ENCODE measurements at regions of chr3 and their contacts with region 1.

Region 1: DNA sequence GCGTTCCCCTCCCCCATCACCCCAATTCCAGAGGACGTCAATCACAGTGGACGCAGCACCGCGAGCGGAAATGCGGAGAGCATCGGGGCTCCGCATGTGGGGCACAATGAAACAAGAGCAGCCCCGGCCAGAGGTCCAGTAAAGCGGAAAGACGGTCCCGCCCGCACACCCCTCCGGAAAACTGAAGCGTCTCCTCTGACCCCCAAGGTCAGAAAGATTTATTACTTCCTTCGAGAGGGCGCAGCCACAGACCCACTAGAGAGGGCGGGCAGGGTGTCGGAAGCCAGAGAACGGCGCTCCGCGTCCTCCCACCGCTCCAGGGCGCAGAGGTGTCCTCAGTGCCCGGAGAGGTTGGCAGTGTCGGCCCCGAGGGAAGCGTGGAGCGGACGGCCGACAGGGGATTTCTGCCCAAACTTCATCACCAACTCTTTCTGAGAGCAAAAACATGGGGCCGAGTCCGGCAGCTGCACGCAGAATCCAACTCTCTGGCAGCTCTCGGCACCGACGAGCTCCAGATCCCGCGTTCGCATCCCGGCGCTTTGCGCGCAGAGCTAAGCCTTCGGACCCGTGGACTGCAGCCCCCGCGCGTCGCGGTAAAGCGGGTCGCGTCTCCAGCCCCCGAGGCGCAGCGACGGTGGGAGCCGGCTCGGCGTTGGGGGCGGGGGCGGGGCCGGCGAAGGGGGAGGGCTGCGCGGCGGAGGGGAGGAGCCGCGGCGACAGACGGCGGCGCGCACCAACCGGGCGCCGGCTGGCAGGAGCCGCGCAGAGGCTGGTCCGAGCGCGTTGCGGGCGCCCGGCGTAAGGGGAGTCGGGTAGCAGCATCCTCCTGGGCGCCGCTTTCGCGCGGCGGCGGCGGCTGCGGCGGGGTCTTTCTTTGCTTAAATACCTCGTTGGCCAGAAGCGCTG is at the start of gene CHST2:
- DNase-seq: peak; percentile 60 to 78 (median 74)
- ATAC-seq: peak; percentile 85
- H3K4me3 ChIP-seq: peak within 1 kb of the TSS; percentile 95
- H3K4me3 Mint-ChIP-seq: peak within 1 kb of the TSS; percentile 90 to 97 (median 94)
- H3K27ac ChIP-seq: peak within 1 kb of the TSS; percentile 76
- H3K27ac Mint-ChIP-seq: peak within 1 kb of the TSS; percentile 81 to 93 (median 87)
- H3K4me1 ChIP-seq: peaks cover 0 to 29% of the 10 kb centered on the region in 2 donors
- H3K4me1 Mint-ChIP-seq: peaks cover 21 to 54% (median 45%) of the 10 kb centered on the region in 7 donors
- H3K27me3 ChIP-seq: no peaks in the 10 kb centered on the region
- H3K27me3 Mint-ChIP-seq: peaks cover 0 to 19% (median 0%) of the 10 kb centered on the region in 5 donors
- total RNA-seq, gene CHST2: 3.4 to 12.3 (median 4.5) TPM

Region 2: DNA sequence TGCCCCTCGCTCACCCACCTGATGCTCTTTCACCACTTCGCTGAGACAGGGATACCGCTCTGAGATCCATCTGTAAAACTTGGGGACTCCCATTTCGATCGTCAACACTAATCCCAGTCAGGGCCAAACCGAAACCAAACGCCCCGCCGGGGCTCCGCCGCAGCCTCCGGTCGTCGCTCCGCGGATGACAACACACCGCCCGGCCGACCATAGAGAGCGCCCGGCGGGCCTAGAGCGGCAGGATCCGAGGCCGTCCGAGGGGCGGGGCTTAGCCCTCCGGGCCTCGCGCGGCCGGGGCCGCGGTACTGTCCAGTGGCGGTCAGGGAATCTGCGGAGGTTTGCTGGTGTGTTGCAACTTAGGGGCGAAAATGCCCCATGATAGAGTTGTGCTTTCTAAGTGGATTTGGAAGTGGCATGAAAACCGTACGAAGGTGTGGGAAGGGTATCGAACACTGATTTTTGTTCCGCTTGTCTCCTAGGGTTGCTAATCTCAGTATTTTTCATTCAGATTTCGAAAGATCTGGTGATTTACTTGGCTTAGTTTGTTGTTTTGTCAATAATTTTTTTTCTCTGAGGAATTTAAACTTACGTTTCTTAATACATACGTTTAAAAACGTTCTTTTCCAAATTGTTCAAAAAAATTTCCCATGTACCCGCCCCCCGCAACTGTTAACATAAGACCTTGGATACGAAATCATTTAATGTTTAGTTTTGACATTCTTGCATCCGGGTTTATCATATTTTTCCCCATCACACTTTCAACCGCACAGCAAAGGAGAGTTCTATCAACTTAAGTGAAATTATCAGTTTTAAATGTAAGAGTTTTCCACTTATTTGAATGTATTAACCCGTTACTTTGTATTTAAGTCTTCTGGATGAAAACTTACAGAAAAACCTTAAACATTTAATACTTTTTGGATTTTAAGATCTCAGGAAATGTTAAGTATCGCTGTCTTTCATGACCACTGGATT is 671.1 kb before region 1 on chr3 and contains the start of gene XRN1:
- CTCF ChIA-PET with region 1: no interaction called
- POLR2A ChIA-PET with region 1: no interaction called
- intact Hi-C with region 1: loop called in 1 of 2 experiments (anchors 1 kb)
- DNase-seq: peak; percentile 90 to 97 (median 94)
- ATAC-seq: peak; percentile 99
- H3K4me3 ChIP-seq: peak within 1 kb of the TSS; percentile 78
- H3K4me3 Mint-ChIP-seq: peak within 1 kb of the TSS; percentile 89 to 100 (median 98)
- H3K27ac ChIP-seq: peak within 1 kb of the TSS; percentile 99
- H3K27ac Mint-ChIP-seq: peak within 1 kb of the TSS; percentile 98 to 100 (median 99)
- H3K4me1 ChIP-seq: peaks cover 31% of the 10 kb centered on the region in 2 donors
- H3K4me1 Mint-ChIP-seq: peaks cover 26 to 55% (median 51%) of the 10 kb centered on the region in 7 donors
- H3K27me3 ChIP-seq: no peaks in the 10 kb centered on the region
- H3K27me3 Mint-ChIP-seq: no peaks in the 10 kb centered on the region
- total RNA-seq, gene XRN1: 86.1 to 123 (median 103) TPM

Region 3: DNA sequence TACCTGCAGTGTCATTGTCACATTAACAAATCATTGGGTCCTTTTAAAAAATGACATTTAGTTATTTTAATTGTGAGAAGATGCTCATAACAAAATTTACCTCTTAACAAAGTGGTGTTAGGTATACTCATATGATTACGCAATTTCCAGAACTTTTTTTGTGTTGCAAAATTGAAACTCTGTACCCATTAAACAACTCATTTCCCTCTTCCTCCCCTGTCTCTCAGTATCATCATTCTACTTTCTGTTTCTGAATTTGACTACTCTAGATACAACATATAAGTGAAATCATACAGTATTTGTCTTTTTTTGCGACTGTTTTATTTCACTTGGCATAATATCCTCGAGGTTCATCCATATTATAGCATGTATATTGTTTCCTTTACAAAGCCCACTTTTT is 58.4 kb before region 1 on chr3:
- CTCF ChIA-PET with region 1: no interaction called
- POLR2A ChIA-PET with region 1: no interaction called
- intact Hi-C with region 1: loop called in 1 of 2 experiments (anchors 5 kb)
- DNase-seq: no peak
- ATAC-seq: no peak
- H3K4me3 ChIP-seq: no peak overlapping the region
- H3K4me3 Mint-ChIP-seq: peak overlapping the region in 1 of 10 donors; percentile 22
- H3K27ac ChIP-seq: no peak overlapping the region
- H3K27ac Mint-ChIP-seq: peak overlapping the region in 5 of 9 donors; percentile 16 to 84 (median 50)
- H3K4me1 ChIP-seq: no peaks in the 10 kb centered on the region
- H3K4me1 Mint-ChIP-seq: peaks cover 0 to 24% (median 10%) of the 10 kb centered on the region in 7 donors
- H3K27me3 ChIP-seq: no peaks in the 10 kb centered on the region
- H3K27me3 Mint-ChIP-seq: no peaks in the 10 kb centered on the region

Region 4: DNA sequence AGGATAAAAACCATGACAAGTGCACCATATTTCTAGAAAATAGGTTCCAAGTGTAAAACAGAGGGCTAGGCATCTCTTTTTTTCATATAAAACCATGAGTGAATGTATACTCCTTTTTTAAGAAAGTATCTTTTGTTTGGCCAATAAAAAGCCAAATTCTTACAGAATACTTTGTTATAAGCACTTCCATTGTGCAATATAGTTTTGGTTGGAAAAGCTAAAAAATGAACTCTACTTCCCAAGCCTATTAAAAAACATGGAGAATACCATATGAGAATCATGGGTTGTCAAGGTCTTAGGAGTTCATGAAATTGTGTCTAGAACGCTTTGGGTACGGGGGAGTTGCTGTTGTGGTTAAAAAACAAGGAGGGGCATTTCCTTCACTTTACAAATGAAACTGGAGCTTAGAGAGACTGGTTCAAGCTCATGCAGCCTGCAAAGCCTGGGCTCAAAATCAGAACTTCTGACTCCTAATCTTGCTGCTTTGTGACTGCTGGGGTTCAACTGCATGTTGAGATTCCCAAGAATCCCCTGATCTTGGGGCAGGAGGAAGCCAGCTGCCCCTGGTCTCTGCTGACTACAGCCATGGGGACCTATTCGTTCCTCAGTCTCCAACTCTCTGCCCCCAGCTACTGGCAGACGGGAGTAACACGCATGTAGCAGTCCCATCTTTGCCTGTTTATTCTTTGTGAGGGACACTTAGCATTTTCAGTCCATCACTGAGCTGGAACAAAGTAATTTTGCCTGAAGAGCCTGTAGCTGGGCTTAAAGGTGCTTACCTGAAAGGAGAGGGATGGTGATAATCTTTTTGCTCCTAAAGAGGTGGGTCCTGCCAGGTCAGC is 229.4 kb after region 1 on chr3:
- CTCF ChIA-PET with region 1: no interaction called
- POLR2A ChIA-PET with region 1: interaction called, 3 read pairs
- intact Hi-C with region 1: loop called (anchors 1 to 2 kb)
- DNase-seq: peak in 6 of 9 donors; percentile 5 to 48 (median 32)
- ATAC-seq: peak; percentile 51
- H3K4me3 ChIP-seq: no peak overlapping the region
- H3K4me3 Mint-ChIP-seq: peak overlapping the region; percentile 23 to 70 (median 54)
- H3K27ac ChIP-seq: no peak overlapping the region
- H3K27ac Mint-ChIP-seq: peak overlapping the region in 8 of 9 donors; percentile 16 to 79 (median 63)
- H3K4me1 ChIP-seq: peaks cover 0 to 20% of the 10 kb centered on the region in 2 donors
- H3K4me1 Mint-ChIP-seq: peaks cover 27 to 74% (median 69%) of the 10 kb centered on the region in 7 donors
- H3K27me3 ChIP-seq: no peaks in the 10 kb centered on the region
- H3K27me3 Mint-ChIP-seq: no peaks in the 10 kb centered on the region

Region 5: DNA sequence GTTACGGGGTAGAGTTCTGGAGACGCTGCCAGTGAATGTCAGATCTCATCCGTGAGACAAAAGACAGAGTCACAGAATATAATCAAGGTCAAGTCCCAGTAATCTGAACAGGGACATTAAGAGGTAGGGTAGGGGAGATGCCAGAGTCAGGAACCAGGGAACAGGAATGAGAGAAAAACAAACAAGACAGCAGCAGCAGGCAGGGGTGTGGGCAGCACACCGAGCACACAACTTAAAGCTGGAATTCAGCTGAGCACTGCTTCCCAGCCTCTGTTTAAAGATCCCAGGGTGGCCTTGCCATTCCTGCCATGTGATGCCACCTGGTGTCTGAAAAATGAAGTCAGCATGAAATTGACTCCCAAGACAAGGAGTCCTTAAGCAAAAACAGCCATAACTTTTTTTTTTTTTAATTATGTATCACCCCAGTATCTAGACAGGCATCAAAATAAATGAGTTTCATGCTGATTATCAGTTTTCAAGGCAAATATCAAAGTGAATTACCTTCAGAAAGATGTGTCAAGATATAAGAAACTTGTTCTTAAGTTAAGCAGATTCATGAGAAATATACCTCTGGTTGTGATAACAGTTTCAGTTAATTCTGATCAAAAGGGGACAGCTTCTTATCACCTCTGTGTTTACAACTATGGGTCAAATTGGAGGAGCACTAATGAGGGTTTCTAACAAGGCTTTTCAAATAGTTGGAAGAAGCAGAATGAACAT is 525.3 kb after region 1 on chr3:
- CTCF ChIA-PET with region 1: no interaction called
- POLR2A ChIA-PET with region 1: no interaction called
- intact Hi-C with region 1: loop called (anchors 1 kb)
- DNase-seq: peak in 5 of 9 donors; percentile 6 to 24 (median 18)
- ATAC-seq: no peak
- H3K4me3 ChIP-seq: no peak overlapping the region
- H3K4me3 Mint-ChIP-seq: no peak overlapping the region
- H3K27ac ChIP-seq: no peak overlapping the region
- H3K27ac Mint-ChIP-seq: peak overlapping the region in 1 of 9 donors; percentile 47
- H3K4me1 ChIP-seq: no peaks in the 10 kb centered on the region
- H3K4me1 Mint-ChIP-seq: peaks cover 0 to 1% (median 0%) of the 10 kb centered on the region in 7 donors
- H3K27me3 ChIP-seq: no peaks in the 10 kb centered on the region
- H3K27me3 Mint-ChIP-seq: no peaks in the 10 kb centered on the region

Region 6: DNA sequence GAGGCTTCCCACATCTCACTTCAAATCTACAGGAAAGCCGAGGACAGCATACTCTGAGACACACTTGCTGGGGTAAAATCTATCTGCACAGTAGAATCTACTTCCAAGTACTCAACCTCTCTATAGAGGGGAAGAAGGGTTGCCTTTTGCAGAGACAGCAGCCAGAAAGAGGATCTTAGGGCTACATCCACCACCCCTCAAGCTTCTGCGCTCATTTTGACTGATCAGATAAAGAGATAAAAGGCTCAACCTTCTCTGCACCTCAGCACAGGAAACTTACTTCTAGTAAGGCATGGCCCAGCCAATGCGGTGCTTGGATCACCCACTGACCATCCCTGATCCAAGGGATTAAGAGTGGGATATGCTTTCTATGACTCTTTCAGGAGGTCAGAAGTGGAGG is 735.9 kb after region 1 on chr3:
- CTCF ChIA-PET with region 1: no interaction called
- POLR2A ChIA-PET with region 1: no interaction called
- intact Hi-C with region 1: loop called in 1 of 2 experiments (anchors 5 kb)
- DNase-seq: peak in 7 of 9 donors; percentile 8 to 42 (median 32)
- ATAC-seq: peak; percentile 62
- H3K4me3 ChIP-seq: no peak overlapping the region
- H3K4me3 Mint-ChIP-seq: peak overlapping the region; percentile 6 to 72 (median 40)
- H3K27ac ChIP-seq: no peak overlapping the region
- H3K27ac Mint-ChIP-seq: peak overlapping the region; percentile 8 to 85 (median 66)
- H3K4me1 ChIP-seq: peaks cover 0 to 17% of the 10 kb centered on the region in 2 donors
- H3K4me1 Mint-ChIP-seq: peaks cover 7 to 37% (median 26%) of the 10 kb centered on the region in 7 donors
- H3K27me3 ChIP-seq: no peaks in the 10 kb centered on the region
- H3K27me3 Mint-ChIP-seq: peaks cover 0 to 27% (median 0%) of the 10 kb centered on the region in 5 donors

Measured in naive thymus-derived CD4-positive, alpha-beta T cell (primary cell).